AG04450 (cell line): ENCODE measurements at regions of chr4 and their contacts with region 1.

Region 1: DNA sequence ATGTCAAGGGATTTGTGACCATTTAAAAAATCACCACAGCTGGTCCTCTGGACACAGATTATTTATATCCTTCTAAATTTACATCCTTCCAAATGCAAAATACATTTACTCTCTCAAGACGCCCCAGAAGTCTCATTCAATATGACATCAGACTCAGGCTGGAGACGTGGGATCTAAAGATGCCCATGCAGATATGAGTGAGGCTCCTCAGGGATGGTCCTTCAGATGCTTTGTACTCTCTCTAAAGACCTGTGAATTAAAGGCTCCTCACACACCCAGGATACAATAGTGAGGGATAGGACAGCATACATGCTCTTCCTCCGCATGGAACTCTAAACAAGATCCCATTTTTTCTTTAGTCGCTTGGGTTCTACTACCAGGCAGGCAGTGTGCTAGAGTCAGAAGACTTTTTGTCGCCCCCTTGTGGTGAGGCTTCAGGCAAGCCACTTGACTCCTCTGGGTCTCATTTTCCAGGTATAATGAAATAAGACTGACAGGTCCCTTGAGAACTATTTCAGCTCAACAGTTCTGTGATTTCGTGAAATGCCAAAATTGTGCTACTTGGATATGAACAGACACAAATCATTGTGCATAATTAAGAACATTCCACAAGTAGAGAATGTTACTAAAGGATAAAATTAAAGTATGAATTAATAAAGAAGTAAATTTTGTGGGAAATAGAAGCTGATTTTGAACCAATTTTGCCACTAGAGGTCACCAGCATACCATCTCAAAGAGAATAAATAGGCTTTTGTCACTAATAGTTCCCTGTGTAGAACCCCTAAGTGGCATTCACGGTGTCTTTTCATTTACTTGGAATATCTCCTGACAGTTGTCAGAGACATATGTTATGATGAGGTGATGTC is 13.7 kb upstream of the SCOC start:
- DNase-seq: peak; percentile 42
- H3K4me3 ChIP-seq: no peak overlapping the region
- H3K27ac ChIP-seq: no peak overlapping the region
- H3K27me3 ChIP-seq: no peaks in the 10 kb centered on the region
- CTCF ChIP-seq: peak; percentile 75

Region 2: DNA sequence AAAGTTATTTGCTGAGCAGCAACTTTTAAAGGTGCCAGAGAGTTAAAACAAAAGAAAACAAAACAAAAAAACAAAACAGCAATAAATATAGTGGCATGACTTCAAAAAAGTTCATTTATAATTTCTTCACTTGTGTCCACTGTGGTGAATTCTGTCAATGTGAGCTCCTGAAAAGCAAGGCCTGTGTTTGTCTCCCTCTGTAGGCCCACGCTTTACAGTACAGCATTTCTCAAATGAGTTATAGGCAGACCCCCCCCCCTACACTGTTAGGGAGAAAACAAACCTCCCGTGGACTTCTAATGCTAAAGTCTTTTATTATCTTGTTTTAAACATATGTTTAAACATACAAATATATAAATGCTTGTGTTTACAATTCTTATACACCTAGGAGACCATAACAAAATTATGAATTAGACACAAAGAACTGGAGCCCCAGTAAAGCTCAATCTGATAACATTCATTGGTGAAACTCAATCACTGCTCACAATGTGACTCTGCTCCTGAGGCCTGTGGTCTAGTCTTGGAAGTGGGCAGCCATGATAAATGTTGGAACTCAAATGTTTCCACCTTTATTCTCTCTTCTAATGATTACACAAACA is 33.3 kb before region 1 on chr4:
- CTCF ChIA-PET with region 1: interaction called, 36 read pairs
- POLR2A ChIA-PET with region 1: no interaction called
- DNase-seq: no peak
- H3K4me3 ChIP-seq: no peak overlapping the region
- H3K27ac ChIP-seq: no peak overlapping the region
- H3K27me3 ChIP-seq: no peaks in the 10 kb centered on the region
- CTCF ChIP-seq: peak; percentile 84

Region 3: DNA sequence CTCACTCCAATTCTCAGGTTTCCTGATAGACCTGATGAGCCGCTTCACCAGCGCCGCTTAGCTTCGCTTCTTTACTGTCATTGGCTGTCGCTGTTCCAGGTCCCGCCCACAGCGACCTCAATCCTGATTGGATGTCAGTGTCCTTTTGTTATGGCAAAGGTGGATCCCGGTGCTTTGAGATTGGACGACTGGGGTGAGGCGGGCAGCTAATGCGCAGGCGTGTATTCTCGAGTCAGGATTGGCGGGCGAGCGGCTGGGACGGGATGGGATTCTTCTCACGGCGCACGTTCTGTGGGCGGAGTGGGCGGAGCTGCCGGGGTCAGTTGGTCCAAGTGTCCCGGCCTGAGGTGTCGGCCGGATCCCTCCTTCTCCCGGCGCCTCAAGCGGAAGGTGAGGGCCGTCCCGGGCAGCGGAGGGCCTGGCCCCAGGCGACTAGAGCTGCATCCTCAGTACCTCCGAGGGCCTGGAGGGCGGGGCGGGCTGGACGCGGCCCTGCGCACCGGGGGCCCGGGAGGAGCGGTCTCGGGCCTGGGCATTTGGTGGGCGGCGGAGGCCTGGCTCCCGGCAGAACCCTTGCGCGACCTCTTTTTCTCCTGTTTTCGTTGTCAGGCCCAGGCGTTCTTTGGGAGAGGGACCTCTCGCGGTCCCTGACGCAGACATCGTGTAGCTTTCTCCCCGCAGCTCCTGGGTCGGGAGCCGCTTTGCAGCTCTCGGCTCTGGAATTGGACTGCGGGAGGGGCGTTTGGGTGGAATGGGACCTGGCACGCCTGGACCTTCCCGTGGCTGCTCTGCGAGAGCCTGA is 13.7 kb after region 1 on chr4 and contains the start of gene SCOC:
- CTCF ChIA-PET with region 1: interaction called, 50 read pairs
- POLR2A ChIA-PET with region 1: no interaction called
- DNase-seq: peak; percentile 98
- H3K4me3 ChIP-seq: peak within 1 kb of the TSS; percentile 75
- H3K27ac ChIP-seq: peak within 1 kb of the TSS; percentile 77
- H3K27me3 ChIP-seq: no peaks in the 10 kb centered on the region
- CTCF ChIP-seq: no peak
- polyA plus RNA-seq, gene SCOC: 39.1 and 62.4 TPM in 2 replicates

Region 4: GRCh38 chr4:140609548-140610425 is 250.0 kb after region 1 on chr4:
- CTCF ChIA-PET with region 1: interaction called, 81 read pairs
- POLR2A ChIA-PET with region 1: no interaction called
- DNase-seq: peak; percentile 4
- H3K4me3 ChIP-seq: no peak overlapping the region
- H3K27ac ChIP-seq: no peak overlapping the region
- H3K27me3 ChIP-seq: peaks cover 5% of the 10 kb centered on the region
- CTCF ChIP-seq: peak; percentile 59